ENCODE measurements at regions of chr16 and their contacts with region 1.

Region 1: DNA sequence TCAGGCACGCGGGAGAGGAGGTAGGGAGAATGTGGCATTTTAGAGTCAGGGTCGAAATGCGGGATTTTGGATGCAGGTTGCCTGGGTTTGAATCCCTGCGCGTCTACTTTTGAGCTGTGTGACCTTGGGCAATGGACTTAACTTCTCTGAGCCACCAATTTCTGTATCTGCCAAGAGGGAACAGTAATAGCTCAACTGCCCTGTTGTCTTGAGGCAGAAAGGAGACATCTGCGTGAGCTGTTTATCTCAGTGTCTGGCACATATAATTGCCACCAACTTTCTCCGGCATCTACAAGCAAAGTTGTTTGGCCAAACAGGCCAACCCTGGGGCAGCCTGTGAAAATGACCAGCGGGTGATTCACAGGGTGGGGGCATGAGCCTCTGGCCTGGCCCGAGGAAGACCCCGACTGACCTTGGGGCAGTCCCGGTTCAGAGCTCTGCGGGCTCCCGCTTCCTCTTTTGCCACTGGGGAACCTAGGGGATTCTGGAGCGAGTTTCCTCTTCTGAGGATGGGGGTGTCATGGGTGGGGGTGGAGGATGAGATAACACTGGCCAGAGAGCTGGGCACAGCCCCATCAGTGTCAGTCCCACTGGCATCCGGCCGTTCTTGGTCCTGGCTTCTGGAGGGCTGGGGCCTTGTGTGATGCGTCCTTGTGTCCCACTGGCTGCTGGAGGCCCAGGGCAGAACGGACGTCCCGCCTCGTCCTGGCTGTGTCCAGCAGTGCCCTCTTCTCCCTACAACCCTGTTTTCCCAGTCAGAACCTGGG is 1.3 kb downstream of the SNN start:
- DNase-seq: no peak
- H3K4me3 ChIP-seq: peak overlapping the region; percentile 87
- H3K27me3 ChIP-seq: no peaks in the 10 kb centered on the region
- CTCF ChIP-seq: no peak

Region 2: DNA sequence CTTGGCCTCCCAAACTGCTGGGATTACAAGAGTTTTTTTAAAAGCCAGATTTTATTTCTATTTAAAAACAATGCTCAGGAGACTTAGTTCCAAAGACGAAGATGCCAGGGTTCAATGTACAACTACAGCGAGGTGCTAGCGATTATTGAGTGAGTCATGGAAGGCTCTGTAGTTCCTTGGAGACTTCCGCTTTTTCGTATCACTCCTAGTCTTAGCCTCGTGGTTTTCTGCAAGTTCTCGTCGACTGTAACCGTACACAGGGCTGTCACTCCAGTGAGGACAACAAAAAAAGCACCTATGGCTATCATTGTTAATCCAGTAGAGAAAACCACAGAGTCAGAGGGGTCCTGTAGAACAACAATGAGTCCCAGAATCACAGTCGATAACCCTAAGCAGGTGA is 150.2 kb after region 1 on chr16:
- CTCF ChIA-PET with region 1: no interaction called
- POLR2A ChIA-PET with region 1: interaction called, 10 read pairs
- DNase-seq: no peak
- H3K4me3 ChIP-seq: no peak overlapping the region
- H3K27me3 ChIP-seq: no peaks in the 10 kb centered on the region
- CTCF ChIP-seq: no peak